ENCODE measurements at regions of chr12 and their contacts with region 1.

Region 1: DNA sequence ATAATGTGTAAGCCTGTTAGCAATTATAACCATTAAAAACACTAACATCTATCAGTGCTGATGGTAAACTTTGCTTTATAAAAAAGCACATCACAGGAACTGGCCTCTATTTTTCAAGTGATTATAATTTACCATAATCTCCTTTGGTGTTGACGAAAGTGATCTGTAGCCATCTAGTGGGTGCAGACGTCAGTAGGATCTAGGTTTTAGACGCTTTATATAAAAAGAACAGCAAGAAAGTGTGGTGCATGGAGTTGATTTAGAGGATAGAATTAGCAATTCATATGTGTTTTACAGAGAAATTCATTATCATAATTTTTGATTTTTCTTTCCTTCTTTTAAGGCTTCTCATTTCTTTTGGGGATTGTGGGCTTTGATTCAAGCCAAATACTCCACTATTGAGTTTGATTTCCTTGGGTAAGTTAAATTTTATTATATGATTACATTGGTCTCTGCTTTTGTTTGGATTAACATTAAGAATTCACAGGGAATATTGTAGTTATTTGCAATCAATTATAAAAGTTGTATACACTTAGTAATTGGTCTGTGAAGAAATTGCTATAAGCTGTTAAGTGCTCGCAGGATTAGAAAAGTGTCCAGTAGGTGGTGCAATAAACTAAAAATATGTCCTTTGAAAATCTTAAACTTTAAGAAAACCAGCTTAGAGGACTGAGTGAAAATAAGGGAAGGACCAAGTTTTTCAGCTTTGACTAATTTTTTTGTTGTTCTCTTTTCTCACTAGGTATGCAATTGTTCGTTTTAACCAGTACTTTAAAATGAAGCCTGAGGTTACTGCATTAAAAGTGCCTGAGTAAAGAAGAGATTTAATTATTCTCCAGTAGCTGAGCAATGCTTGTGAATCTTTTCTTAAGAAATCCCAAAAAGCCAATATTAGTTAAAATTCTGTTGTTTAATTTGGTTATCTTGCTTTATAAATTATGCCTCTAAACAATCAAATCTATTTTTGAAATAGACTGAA is 59.5 kb downstream of the ETNK1 start:
- DNase-seq: peak; percentile 71
- H3K4me3 ChIP-seq: no peak overlapping the region
- H3K27ac ChIP-seq: no peak overlapping the region
- H3K4me1 ChIP-seq: peaks cover 18% of the 10 kb centered on the region
- H3K27me3 ChIP-seq: no peaks in the 10 kb centered on the region
- CTCF ChIP-seq: peak; percentile 33 to 39
- POLR2A ChIP-seq: no peak

Region 2: DNA sequence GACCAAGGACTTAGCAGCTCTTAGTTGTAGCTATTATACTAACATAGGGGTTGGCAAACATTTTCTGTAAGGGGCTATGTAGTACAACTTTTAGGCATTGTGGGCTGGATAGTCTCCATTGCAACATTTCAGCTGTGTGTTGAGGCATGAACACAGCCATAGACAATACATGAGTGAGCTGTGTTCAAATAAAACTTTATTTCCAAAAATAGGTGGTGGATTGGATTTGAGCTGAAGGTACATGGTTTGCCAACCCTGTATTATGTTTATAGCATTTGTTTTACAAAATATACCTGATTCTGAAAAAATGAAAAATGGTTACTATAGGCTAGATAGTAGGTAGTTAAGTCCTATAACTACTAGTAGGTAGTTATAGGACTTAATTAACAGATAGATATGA is 19.0 kb before region 1 on chr12:
- CTCF ChIA-PET with region 1: interaction called, 72 read pairs
- POLR2A ChIA-PET with region 1: no interaction called
- dilution Hi-C with region 1: no loop called
- intact Hi-C with region 1: no loop called
- DNase-seq: no peak
- H3K4me3 ChIP-seq: no peak overlapping the region
- H3K27ac ChIP-seq: no peak overlapping the region
- H3K4me1 ChIP-seq: no peaks in the 10 kb centered on the region
- H3K27me3 ChIP-seq: no peaks in the 10 kb centered on the region
- CTCF ChIP-seq: no peak
- POLR2A ChIP-seq: no peak

Region 3: GRCh38 chr12:22700106-22700505 is 15.7 kb after region 1 on chr12:
- CTCF ChIA-PET with region 1: interaction called, 11 read pairs
- POLR2A ChIA-PET with region 1: no interaction called
- dilution Hi-C with region 1: no loop called
- intact Hi-C with region 1: no loop called
- DNase-seq: peak; percentile 53
- H3K4me3 ChIP-seq: no peak overlapping the region
- H3K27ac ChIP-seq: no peak overlapping the region
- H3K4me1 ChIP-seq: no peaks in the 10 kb centered on the region
- H3K27me3 ChIP-seq: peaks cover 0 to under 1% of the 10 kb centered on the region in 2 experiments
- CTCF ChIP-seq: no peak
- POLR2A ChIP-seq: no peak

Region 4: DNA sequence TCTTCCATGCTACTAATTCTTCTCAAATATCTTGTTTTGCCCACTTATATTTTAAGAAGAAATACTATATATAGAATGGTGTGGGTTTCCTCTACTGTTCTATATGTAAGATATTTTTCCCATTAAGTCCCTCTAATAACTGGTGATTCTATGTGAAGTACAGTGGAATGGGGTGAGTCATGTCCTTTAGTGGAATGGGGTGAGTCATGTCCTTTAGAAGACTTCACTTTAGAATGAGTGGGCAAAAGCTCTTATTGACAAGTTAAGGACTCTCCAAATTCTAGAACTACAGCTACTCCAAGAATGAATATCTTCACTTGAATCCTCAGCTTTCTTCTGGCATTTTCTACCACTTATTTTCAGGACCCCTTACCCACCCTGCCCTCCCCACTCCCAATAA is 290.4 kb after region 1 on chr12:
- CTCF ChIA-PET with region 1: interaction called, 8 read pairs
- POLR2A ChIA-PET with region 1: no interaction called
- dilution Hi-C with region 1: no loop called
- intact Hi-C with region 1: loop called (anchors 10 kb)
- DNase-seq: peak; percentile 83
- H3K4me3 ChIP-seq: no peak overlapping the region
- H3K27ac ChIP-seq: peak overlapping the region; percentile 45
- H3K4me1 ChIP-seq: peaks cover 20% of the 10 kb centered on the region
- H3K27me3 ChIP-seq: no peaks in the 10 kb centered on the region
- CTCF ChIP-seq: no peak
- POLR2A ChIP-seq: no peak

Region 5: GRCh38 chr12:23083267-23083666 is 398.8 kb after region 1 on chr12:
- CTCF ChIA-PET with region 1: no interaction called
- POLR2A ChIA-PET with region 1: no interaction called
- dilution Hi-C with region 1: no loop called
- intact Hi-C with region 1: loop called (anchors 10 kb)
- DNase-seq: peak; percentile 64
- H3K4me3 ChIP-seq: no peak overlapping the region
- H3K27ac ChIP-seq: no peak overlapping the region
- H3K4me1 ChIP-seq: peaks cover 25% of the 10 kb centered on the region
- H3K27me3 ChIP-seq: no peaks in the 10 kb centered on the region
- CTCF ChIP-seq: no peak
- POLR2A ChIP-seq: no peak